SK-N-SH (cell line): ENCODE measurements at regions of chr2 and their contacts with region 1.

Region 1: GRCh38 chr2:27356382-27357181 is at the start of gene GTF3C2:
- DNase-seq: peak; percentile 97
- H3K4me3 ChIP-seq: peak within 1 kb of the TSS; percentile 87 to 93
- H3K27ac ChIP-seq: peak within 1 kb of the TSS; percentile 90 to 93
- H3K4me1 ChIP-seq: peaks cover 7 to 19% of the 10 kb centered on the region in 2 experiments; a peak in 3 of 4 replicates
- H3K27me3 ChIP-seq: no peaks in the 10 kb centered on the region
- CTCF ChIP-seq: no peak
- EP300 ChIP-seq: peak in 1 of 2 experiments; percentile 24; a peak in 1 of 4 replicates
- RAD21 ChIP-seq: no peak
- polyA plus RNA-seq, gene GTF3C2: 65.8 and 76.0 TPM in 2 replicates

Region 2: GRCh38 chr2:27370026-27370815 is 13.6 kb after region 1 on chr2 and contains the starts of genes EIF2B4 and SNX17:
- CTCF ChIA-PET with region 1: interaction called, 16 read pairs
- POLR2A ChIA-PET with region 1: interaction called, 24 read pairs
- DNase-seq: peak; percentile 98
- H3K4me3 ChIP-seq: peak within 1 kb of the TSS; percentile 94 to 99
- H3K27ac ChIP-seq: peak within 1 kb of the TSS; percentile 79 to 89
- H3K4me1 ChIP-seq: peaks cover 11 to 22% of the 10 kb centered on the region in 2 experiments; a peak in 3 of 4 replicates
- H3K27me3 ChIP-seq: no peaks in the 10 kb centered on the region
- CTCF ChIP-seq: peak; percentile 84
- EP300 ChIP-seq: no peak; a peak in 1 of 4 replicates
- RAD21 ChIP-seq: peak; percentile 55
- polyA plus RNA-seq, gene EIF2B4: 51.7 and 56.0 TPM in 2 replicates
- polyA plus RNA-seq, gene SNX17: 128 and 145 TPM in 2 replicates

Region 3: DNA sequence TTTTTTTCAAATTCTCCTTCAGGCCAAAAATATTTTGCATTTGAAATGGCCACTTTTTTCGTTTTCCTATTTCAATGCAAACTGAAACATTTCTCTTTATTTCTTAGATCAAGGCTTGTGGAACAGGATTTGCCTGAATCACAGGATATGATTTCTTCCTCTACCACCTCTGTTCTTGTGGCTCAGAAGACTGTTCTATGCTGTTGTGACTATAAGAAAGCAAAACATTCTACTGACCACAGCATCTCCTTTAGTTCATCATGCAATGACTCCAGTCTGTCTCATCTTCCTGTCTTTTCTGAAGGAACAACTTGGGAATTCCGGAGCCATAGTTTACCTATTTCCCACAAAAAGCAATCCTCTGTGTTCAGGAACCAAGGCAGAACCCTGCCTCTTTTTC is 210.0 kb after region 1 on chr2:
- CTCF ChIA-PET with region 1: no interaction called
- POLR2A ChIA-PET with region 1: no interaction called
- DNase-seq: no peak
- H3K4me3 ChIP-seq: no peak overlapping the region
- H3K27ac ChIP-seq: peak overlapping the region in 1 of 2 experiments; percentile 62; a peak in 2 of 4 replicates
- H3K4me1 ChIP-seq: peaks cover 0 to 6% of the 10 kb centered on the region in 2 experiments; a peak in 1 of 4 replicates
- H3K27me3 ChIP-seq: no peaks in the 10 kb centered on the region
- CTCF ChIP-seq: no peak
- EP300 ChIP-seq: no peak
- RAD21 ChIP-seq: no peak